CD8-positive, alpha-beta T cell (primary cell): ENCODE measurements at regions of chr4 and their contacts with region 1.

Region 1: GRCh38 chr4:184745831-184746795 is 12.2 kb upstream of the CENPU start:
- DNase-seq: peak; percentile 31 to 81 (median 74)
- ATAC-seq: peak; percentile 97
- H3K4me3 ChIP-seq: no peak overlapping the region
- H3K4me3 Mint-ChIP-seq: peak overlapping the region; percentile 53
- H3K27ac ChIP-seq: no peak overlapping the region
- H3K27ac Mint-ChIP-seq: peak overlapping the region; percentile 78
- H3K4me1 ChIP-seq: peaks cover 8% of the 10 kb centered on the region
- H3K4me1 Mint-ChIP-seq: peaks cover 16% of the 10 kb centered on the region
- H3K27me3 ChIP-seq: no peaks in the 10 kb centered on the region
- H3K27me3 Mint-ChIP-seq: peaks cover 3% of the 10 kb centered on the region
- CTCF ChIP-seq: peak; percentile 68

Region 2: DNA sequence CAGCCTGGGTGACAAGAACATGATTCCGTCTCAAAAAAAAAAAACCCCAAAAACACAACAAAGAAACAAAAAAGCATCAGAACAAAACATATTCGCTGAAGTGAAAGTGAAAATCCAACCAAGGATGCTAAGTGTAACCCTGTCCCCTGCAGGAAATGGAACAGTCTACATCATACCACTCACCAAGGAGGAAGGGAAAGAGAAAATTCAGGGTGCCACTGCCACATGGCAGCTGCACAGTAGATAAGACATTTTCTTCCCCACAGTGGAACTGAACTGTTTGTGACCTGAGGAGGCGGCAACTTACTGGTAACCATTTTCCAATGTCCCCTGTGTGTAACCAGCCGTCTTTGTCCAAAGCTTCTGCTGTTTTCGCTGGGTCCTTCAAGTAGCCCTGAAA is 16.0 kb after region 1 on chr4:
- CTCF ChIA-PET with region 1: interaction called, 5 read pairs
- POLR2A ChIA-PET with region 1: no interaction called
- intact Hi-C with region 1: loop called in 1 of 2 experiments (anchors 2 kb)
- DNase-seq: peak in 7 of 9 experiments; percentile 16 to 85 (median 39)
- ATAC-seq: peak; percentile 98
- H3K4me3 ChIP-seq: peak overlapping the region in 1 of 2 experiments; percentile 13
- H3K4me3 Mint-ChIP-seq: peak overlapping the region; percentile 66
- H3K27ac ChIP-seq: peak overlapping the region; percentile 1 to 70
- H3K27ac Mint-ChIP-seq: peak overlapping the region; percentile 88
- H3K4me1 ChIP-seq: peaks cover 15% of the 10 kb centered on the region
- H3K4me1 Mint-ChIP-seq: peaks cover 17% of the 10 kb centered on the region
- H3K27me3 ChIP-seq: no peaks in the 10 kb centered on the region
- H3K27me3 Mint-ChIP-seq: no peaks in the 10 kb centered on the region
- CTCF ChIP-seq: peak; percentile 16

Region 3: GRCh38 chr4:184983672-184984356 is 237.7 kb after region 1 on chr4:
- CTCF ChIA-PET with region 1: interaction called, 4 read pairs
- POLR2A ChIA-PET with region 1: no interaction called
- intact Hi-C with region 1: loop called in 1 of 2 experiments (anchors 1 kb)
- DNase-seq: peak; percentile 12 to 75 (median 55)
- ATAC-seq: peak; percentile 78
- H3K4me3 ChIP-seq: peak overlapping the region; percentile 27 to 40
- H3K4me3 Mint-ChIP-seq: no peak overlapping the region
- H3K27ac ChIP-seq: no peak overlapping the region
- H3K27ac Mint-ChIP-seq: no peak overlapping the region
- H3K4me1 ChIP-seq: peaks cover 19% of the 10 kb centered on the region
- H3K4me1 Mint-ChIP-seq: no peaks in the 10 kb centered on the region
- H3K27me3 ChIP-seq: no peaks in the 10 kb centered on the region
- H3K27me3 Mint-ChIP-seq: no peaks in the 10 kb centered on the region
- CTCF ChIP-seq: no peak

Region 4: GRCh38 chr4:185011408-185011807 is 265.3 kb after region 1 on chr4:
- CTCF ChIA-PET with region 1: interaction called, 3 read pairs
- POLR2A ChIA-PET with region 1: no interaction called
- intact Hi-C with region 1: loop called (anchors 1 to 5 kb)
- DNase-seq: peak in 4 of 9 experiments; percentile 20 to 36 (median 26)
- ATAC-seq: no peak
- H3K4me3 ChIP-seq: no peak overlapping the region
- H3K4me3 Mint-ChIP-seq: no peak overlapping the region
- H3K27ac ChIP-seq: no peak overlapping the region
- H3K27ac Mint-ChIP-seq: no peak overlapping the region
- H3K4me1 ChIP-seq: no peaks in the 10 kb centered on the region
- H3K4me1 Mint-ChIP-seq: peaks cover 5% of the 10 kb centered on the region
- H3K27me3 ChIP-seq: peaks cover 0 to 5% of the 10 kb centered on the region in 2 experiments
- H3K27me3 Mint-ChIP-seq: peaks cover 73% of the 10 kb centered on the region
- CTCF ChIP-seq: peak; percentile 27

Region 5: GRCh38 chr4:185134307-185134869 is 388.3 kb after region 1 on chr4:
- CTCF ChIA-PET with region 1: interaction called, 3 read pairs
- POLR2A ChIA-PET with region 1: no interaction called
- intact Hi-C with region 1: loop called (anchors 1 to 2 kb)
- DNase-seq: peak in 2 of 9 experiments; percentile 61 to 68
- ATAC-seq: peak; percentile 87
- H3K4me3 ChIP-seq: no peak overlapping the region
- H3K4me3 Mint-ChIP-seq: no peak overlapping the region
- H3K27ac ChIP-seq: no peak overlapping the region
- H3K27ac Mint-ChIP-seq: no peak overlapping the region
- H3K4me1 ChIP-seq: no peaks in the 10 kb centered on the region
- H3K4me1 Mint-ChIP-seq: no peaks in the 10 kb centered on the region
- H3K27me3 ChIP-seq: peaks cover 0 to 5% of the 10 kb centered on the region in 2 experiments
- H3K27me3 Mint-ChIP-seq: peaks cover 37% of the 10 kb centered on the region
- CTCF ChIP-seq: peak; percentile 86

Region 6: GRCh38 chr4:186037692-186038658 is 1291.9 kb after region 1 on chr4:
- CTCF ChIA-PET with region 1: no interaction called
- POLR2A ChIA-PET with region 1: no interaction called
- intact Hi-C with region 1: loop called in 1 of 2 experiments (anchors 5 kb)
- DNase-seq: peak in 2 of 9 experiments; percentile 62 to 63
- ATAC-seq: no peak
- H3K4me3 ChIP-seq: no peak overlapping the region
- H3K4me3 Mint-ChIP-seq: no peak overlapping the region
- H3K27ac ChIP-seq: no peak overlapping the region
- H3K27ac Mint-ChIP-seq: no peak overlapping the region
- H3K4me1 ChIP-seq: no peaks in the 10 kb centered on the region
- H3K4me1 Mint-ChIP-seq: no peaks in the 10 kb centered on the region
- H3K27me3 ChIP-seq: no peaks in the 10 kb centered on the region
- H3K27me3 Mint-ChIP-seq: peaks cover 27% of the 10 kb centered on the region
- CTCF ChIP-seq: peak; percentile 63